GM12878 (cell line): ENCODE measurements at regions of chr1 and their contacts with region 1.

Region 1: DNA sequence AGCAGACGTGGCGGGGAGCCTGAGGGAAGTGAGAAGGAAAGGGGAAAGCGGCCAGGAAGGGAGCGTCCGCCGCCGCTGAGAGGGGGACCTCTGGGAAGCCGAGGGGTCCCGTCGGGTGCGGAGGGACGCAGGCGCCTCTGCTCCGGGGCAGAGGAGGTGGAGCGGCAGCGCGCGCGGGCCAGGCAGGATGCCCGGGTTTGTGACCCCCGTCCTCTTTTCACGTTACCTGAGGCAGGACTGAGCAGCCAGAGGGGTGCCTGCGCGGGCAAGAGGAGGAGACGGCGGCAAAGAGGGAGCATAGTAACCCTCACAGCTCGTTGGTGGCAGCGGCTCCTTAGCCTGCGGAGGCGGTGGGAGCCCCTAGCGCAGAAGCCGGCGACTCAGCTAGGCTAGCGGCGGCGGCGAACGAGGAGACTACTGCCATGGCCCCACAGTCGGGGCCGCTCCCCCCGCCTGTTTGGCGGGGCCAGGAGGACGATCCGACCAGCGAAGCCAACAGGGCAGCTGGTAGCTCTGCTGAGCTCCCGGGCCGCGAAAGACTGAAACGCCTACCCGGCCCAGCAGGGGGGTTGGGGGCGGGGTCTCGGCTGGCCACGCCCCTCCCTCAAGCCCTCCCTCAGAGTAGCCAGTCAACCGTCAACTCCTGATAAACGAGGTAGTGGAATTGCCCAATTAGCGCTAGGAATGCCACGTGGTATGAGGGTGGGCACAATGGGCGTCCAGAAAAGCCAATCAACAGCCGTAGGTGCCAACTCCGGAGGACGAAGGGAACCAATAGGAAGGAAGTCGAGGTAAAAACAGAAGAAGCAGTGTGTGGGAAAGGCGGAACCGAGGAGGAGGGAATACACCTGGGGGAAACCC is at the start of gene TESK2:
- DNase-seq: peak; percentile 100
- ATAC-seq: peak; percentile 94
- H3K4me3 ChIP-seq: peak within 1 kb of the TSS; percentile 83
- H3K27ac ChIP-seq: peak within 1 kb of the TSS; percentile 32; the same call in 1 of the 2 replicates
- H3K4me1 ChIP-seq: peaks cover 4% of the 10 kb centered on the region; the same call in 1 of the 2 replicates
- H3K27me3 ChIP-seq: no peaks in the 10 kb centered on the region
- CTCF ChIP-seq: peak in 1 of 3 experiments; percentile 14; a peak in 1 of 6 replicates
- EP300 ChIP-seq: no peak
- POLR2A ChIP-seq: peak; percentile 88
- RAD21 ChIP-seq: no peak
- polyA plus RNA-seq, gene TESK2: 2.2 to 2.5 TPM

Region 2: DNA sequence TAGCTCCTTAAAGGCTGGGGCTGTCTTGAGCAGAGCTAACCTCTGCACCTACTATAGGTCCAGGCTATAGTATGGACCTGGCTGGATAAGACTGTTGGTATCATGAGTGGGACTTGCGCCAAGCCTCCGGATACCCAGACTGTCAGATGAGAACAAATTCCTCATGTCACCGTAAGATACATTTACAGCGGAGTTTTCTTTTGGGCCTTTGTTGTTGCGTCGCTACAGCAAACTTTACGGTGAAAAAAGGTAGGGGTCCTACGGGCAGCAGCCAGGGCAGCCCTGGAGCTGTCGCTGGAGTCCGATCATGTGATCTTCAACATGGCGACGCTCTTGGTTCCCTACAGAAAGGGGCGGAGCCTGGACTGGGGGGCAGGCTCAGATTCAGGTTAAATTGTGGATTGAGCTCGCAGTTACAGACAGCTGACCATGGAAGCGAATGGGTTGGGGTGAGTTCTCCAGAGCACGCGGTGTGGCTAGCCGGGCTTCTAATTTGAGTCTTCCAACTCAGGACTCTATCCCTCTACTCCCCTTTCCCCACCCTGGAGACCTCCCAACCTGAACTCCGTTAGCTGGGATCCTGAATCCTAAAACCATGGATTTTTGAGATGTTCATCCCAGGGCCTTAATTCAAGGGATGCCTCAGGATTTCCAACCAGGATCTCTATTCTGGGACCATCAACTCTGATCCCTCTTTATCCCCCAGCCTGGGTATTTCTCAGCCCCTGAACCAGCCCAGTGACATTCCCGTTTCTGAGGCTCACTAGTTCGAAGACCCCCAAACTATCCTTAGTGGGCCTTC is 478.8 kb before region 1 on chr1 and contains the start of gene UROD:
- CTCF ChIA-PET with region 1: interaction called, 150 read pairs
- POLR2A ChIA-PET with region 1: interaction called, 9 read pairs
- RAD21 ChIA-PET with region 1: interaction called, 93 read pairs
- SMC1A ChIA-PET with region 1: interaction called, 84 read pairs
- in situ Hi-C with region 1: loop called (anchors 5 kb)
- intact Hi-C with region 1: loop called (anchors 1 kb)
- DNase-seq: peak; percentile 90
- ATAC-seq: peak; percentile 83
- H3K4me3 ChIP-seq: peak within 1 kb of the TSS; percentile 90
- H3K27ac ChIP-seq: peak within 1 kb of the TSS; percentile 79
- H3K4me1 ChIP-seq: peaks cover 17% of the 10 kb centered on the region
- H3K27me3 ChIP-seq: no peaks in the 10 kb centered on the region
- CTCF ChIP-seq: no peak
- EP300 ChIP-seq: peak in 1 of 2 experiments; percentile 73; a peak in 2 of 4 replicates
- POLR2A ChIP-seq: peak; percentile 86
- RAD21 ChIP-seq: no peak
- polyA plus RNA-seq, gene UROD: 236 to 330 TPM

Region 3: GRCh38 chr1:45339789-45340570 is 150.9 kb before region 1 on chr1 and contains the starts of genes MUTYH and TOE1:
- CTCF ChIA-PET with region 1: interaction called, 94 read pairs
- POLR2A ChIA-PET with region 1: interaction called, 23 read pairs
- RAD21 ChIA-PET with region 1: interaction called, 83 read pairs
- SMC1A ChIA-PET with region 1: interaction called, 28 read pairs
- in situ Hi-C with region 1: no loop called
- intact Hi-C with region 1: no loop called
- DNase-seq: peak; percentile 73
- ATAC-seq: peak; percentile 92
- H3K4me3 ChIP-seq: peak within 1 kb of the TSS; percentile 71
- H3K27ac ChIP-seq: peak within 1 kb of the TSS; percentile 93
- H3K4me1 ChIP-seq: peaks cover 11% of the 10 kb centered on the region
- H3K27me3 ChIP-seq: no peaks in the 10 kb centered on the region
- CTCF ChIP-seq: no peak
- EP300 ChIP-seq: no peak
- POLR2A ChIP-seq: peak; percentile 97
- RAD21 ChIP-seq: no peak
- polyA plus RNA-seq, gene MUTYH: 2.5 to 10.5 TPM
- polyA plus RNA-seq, gene TOE1: 33.5 to 38.0 TPM

Region 4: GRCh38 chr1:45375104-45376090 is 115.5 kb before region 1 on chr1:
- CTCF ChIA-PET with region 1: interaction called, 15 read pairs
- POLR2A ChIA-PET with region 1: interaction called, 3 read pairs
- RAD21 ChIA-PET with region 1: interaction called, 38 read pairs
- SMC1A ChIA-PET with region 1: interaction called, 18 read pairs
- in situ Hi-C with region 1: no loop called
- intact Hi-C with region 1: no loop called
- DNase-seq: no peak
- ATAC-seq: peak; percentile 43
- H3K4me3 ChIP-seq: no peak overlapping the region
- H3K27ac ChIP-seq: peak overlapping the region; percentile 37; the same call in 1 of the 2 replicates
- H3K4me1 ChIP-seq: peaks cover 48% of the 10 kb centered on the region
- H3K27me3 ChIP-seq: no peaks in the 10 kb centered on the region
- CTCF ChIP-seq: no peak
- EP300 ChIP-seq: no peak
- POLR2A ChIP-seq: no peak
- RAD21 ChIP-seq: no peak

Region 5: GRCh38 chr1:45470306-45470798 is 20.5 kb before region 1 on chr1:
- CTCF ChIA-PET with region 1: interaction called, 47 read pairs
- POLR2A ChIA-PET with region 1: interaction called, 7 read pairs
- RAD21 ChIA-PET with region 1: interaction called, 25 read pairs
- SMC1A ChIA-PET with region 1: interaction called, 37 read pairs
- in situ Hi-C with region 1: no loop called
- intact Hi-C with region 1: loop called (anchors 1 kb)
- DNase-seq: peak; percentile 72
- ATAC-seq: peak; percentile 82
- H3K4me3 ChIP-seq: no peak overlapping the region
- H3K27ac ChIP-seq: no peak overlapping the region
- H3K4me1 ChIP-seq: peaks cover 61% of the 10 kb centered on the region
- H3K27me3 ChIP-seq: no peaks in the 10 kb centered on the region
- CTCF ChIP-seq: no peak
- EP300 ChIP-seq: peak in 1 of 2 experiments; percentile 32; a peak in 1 of 4 replicates
- POLR2A ChIP-seq: no peak
- RAD21 ChIP-seq: no peak